ENCODE measurements at regions of chr2 and their contacts with region 1.

Region 1: GRCh38 chr2:85648619-85649018 is 19.4 kb downstream of the SFTPB start:
- DNase-seq: no peak
- H3K4me3 ChIP-seq: no peak overlapping the region
- H3K27ac ChIP-seq: no peak overlapping the region
- H3K4me1 ChIP-seq: no peaks in the 10 kb centered on the region
- H3K27me3 ChIP-seq: no peaks in the 10 kb centered on the region
- CTCF ChIP-seq: peak in 2 of 3 experiments; percentile 11 to 25; a peak in 2 of 4 replicates
- EP300 ChIP-seq: no peak
- POLR2A ChIP-seq: no peak
- RAD21 ChIP-seq: peak in 1 of 2 experiments; percentile 14; a peak in 1 of 4 replicates

Region 2: GRCh38 chr2:85589982-85590791 is 58.4 kb before region 1 on chr2:
- CTCF ChIA-PET with region 1: no interaction called
- POLR2A ChIA-PET with region 1: no interaction called
- DNase-seq: no peak
- H3K4me3 ChIP-seq: no peak overlapping the region
- H3K27ac ChIP-seq: no peak overlapping the region
- H3K4me1 ChIP-seq: peaks cover 0 to 8% (median 2%) of the 10 kb centered on the region in 4 experiments; a peak in 4 of 7 replicates
- H3K27me3 ChIP-seq: peaks cover under 1 to 12% (median 4%) of the 10 kb centered on the region in 4 experiments; a peak in 6 of 7 replicates
- CTCF ChIP-seq: no peak
- EP300 ChIP-seq: no peak
- POLR2A ChIP-seq: no peak
- RAD21 ChIP-seq: no peak

Region 3: GRCh38 chr2:85635636-85636035 is 13.0 kb before region 1 on chr2:
- CTCF ChIA-PET with region 1: interaction called, 69 read pairs
- POLR2A ChIA-PET with region 1: interaction called, 11 read pairs
- DNase-seq: no peak
- H3K4me3 ChIP-seq: no peak overlapping the region
- H3K27ac ChIP-seq: no peak overlapping the region
- H3K4me1 ChIP-seq: no peaks in the 10 kb centered on the region
- H3K27me3 ChIP-seq: no peaks in the 10 kb centered on the region
- CTCF ChIP-seq: no peak
- EP300 ChIP-seq: no peak
- POLR2A ChIP-seq: no peak
- RAD21 ChIP-seq: no peak

Region 4: DNA sequence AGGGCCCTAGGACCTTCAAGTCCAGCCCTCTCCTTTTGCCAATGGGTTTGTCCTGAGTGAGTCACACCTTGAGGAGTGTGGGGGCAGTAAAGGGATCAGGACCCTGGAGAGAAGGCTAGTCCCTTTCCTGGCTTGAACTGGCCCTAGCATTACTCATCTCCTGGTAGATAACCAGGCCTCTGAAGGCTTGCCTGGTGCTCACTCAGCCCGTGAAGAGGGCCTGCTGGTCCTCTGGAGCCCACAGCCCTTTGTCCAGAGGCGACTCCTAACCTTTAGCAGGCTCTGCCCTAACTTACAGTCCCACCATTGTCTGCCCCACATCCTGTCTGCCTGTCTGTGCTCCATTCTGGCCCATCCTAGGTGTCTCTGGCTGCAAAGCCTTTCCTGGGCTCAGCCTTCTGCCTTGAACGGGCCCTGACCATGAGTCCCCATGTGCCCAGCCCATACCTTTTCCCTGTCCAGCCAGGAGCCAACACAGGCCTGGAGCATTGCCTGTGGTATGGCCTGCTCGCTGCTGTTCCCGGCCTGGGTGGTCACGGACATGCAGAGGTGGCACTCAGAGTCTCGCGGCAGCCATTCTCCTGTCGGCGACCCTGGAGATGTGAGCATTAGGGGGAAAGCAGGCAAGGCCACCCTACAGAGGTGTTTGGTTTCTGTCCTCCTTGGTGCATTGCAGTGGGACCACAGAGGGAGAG is 14.4 kb after region 1 on chr2:
- CTCF ChIA-PET with region 1: interaction called, 38 read pairs
- POLR2A ChIA-PET with region 1: interaction called, 8 read pairs
- DNase-seq: peak in 1 of 2 experiments; percentile 25
- H3K4me3 ChIP-seq: no peak overlapping the region
- H3K27ac ChIP-seq: no peak overlapping the region
- H3K4me1 ChIP-seq: peaks cover 0 to 3% (median under 1%) of the 10 kb centered on the region in 4 experiments; a peak in 2 of 7 replicates
- H3K27me3 ChIP-seq: no peaks in the 10 kb centered on the region
- CTCF ChIP-seq: no peak
- EP300 ChIP-seq: no peak
- POLR2A ChIP-seq: no peak
- RAD21 ChIP-seq: no peak